ENCODE measurements at regions of chr14 and their contacts with region 1.

Region 1: DNA sequence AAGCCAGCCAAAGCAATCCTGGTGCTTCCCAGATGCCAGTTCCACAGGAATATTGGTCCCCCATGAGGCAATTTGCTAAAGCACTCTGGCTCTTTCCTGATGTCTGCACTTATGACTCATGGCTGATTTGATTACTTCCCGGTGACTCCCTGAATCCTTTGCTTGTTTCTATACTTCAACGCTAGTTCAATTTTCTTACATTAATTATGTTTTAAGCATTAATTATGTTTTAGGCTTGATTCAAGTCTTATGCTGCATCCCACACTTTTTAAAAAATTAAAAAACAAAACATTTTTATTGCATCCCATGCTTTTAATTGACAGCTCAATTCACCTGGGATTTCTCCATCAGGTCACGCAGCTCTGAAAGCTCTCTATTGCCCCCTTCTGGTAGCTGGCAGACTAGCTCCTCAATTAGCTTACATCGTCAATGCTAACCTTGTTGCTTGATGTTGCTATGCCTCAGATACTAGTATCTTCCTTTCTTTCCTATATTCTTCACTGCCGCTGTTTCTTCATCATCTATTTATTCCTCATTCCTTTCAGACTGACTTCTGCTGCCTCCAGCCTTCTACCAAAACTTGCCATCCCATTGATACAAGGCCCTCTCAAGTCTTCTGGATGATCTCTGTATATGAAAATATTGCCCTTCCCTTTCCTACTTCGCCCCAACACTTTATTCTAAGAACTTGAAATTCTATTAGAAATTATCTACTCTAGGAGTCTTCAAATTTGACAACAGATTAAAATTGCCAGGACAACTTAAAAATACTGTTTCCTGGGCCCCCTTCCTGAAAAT is 32.0 kb downstream of the TSHR start:
- DNase-seq: peak; percentile 74
- ATAC-seq: peak; percentile 34
- H3K4me3 Mint-ChIP-seq: no peak overlapping the region
- H3K27ac Mint-ChIP-seq: no peak overlapping the region
- H3K4me1 Mint-ChIP-seq: no peaks in the 10 kb centered on the region
- H3K27me3 Mint-ChIP-seq: peaks cover 9% of the 10 kb centered on the region

Region 2: DNA sequence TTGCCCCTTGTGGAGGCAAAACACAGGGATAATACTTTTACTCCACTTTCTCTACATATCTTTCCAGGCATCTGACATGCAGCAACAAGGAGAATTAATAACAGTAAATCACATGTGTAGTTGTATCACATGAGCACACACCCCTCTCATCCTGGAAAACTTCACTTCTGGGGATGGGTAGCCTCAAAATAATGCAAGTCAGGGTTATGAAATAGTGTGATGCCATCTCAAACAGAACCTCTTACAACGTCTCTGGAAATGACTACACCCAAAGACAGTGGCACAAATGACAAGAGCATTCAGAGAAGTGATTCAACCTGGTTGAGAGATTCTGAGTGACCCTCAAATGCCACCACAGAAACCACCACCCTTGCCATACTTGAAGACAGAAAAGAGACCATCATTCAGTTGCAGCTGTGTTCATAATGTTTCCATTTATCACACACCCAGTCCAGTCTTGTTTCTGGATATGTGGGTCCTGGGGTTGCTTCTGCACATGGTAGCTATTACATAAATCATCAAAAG is 778.9 kb before region 1 on chr14:
- CTCF ChIA-PET with region 1: no interaction called
- POLR2A ChIA-PET with region 1: no interaction called
- intact Hi-C with region 1: loop called in 1 of 2 experiments (anchors 5 kb)
- DNase-seq: peak; percentile 8
- ATAC-seq: no peak
- H3K4me3 Mint-ChIP-seq: no peak overlapping the region
- H3K27ac Mint-ChIP-seq: no peak overlapping the region
- H3K4me1 Mint-ChIP-seq: no peaks in the 10 kb centered on the region
- H3K27me3 Mint-ChIP-seq: peaks cover 1% of the 10 kb centered on the region

Region 3: GRCh38 chr14:80850197-80850814 is 137.1 kb before region 1 on chr14:
- CTCF ChIA-PET with region 1: no interaction called
- POLR2A ChIA-PET with region 1: no interaction called
- intact Hi-C with region 1: loop called in 1 of 2 experiments (anchors 5 kb)
- DNase-seq: no peak
- ATAC-seq: no peak
- H3K4me3 Mint-ChIP-seq: no peak overlapping the region
- H3K27ac Mint-ChIP-seq: no peak overlapping the region
- H3K4me1 Mint-ChIP-seq: no peaks in the 10 kb centered on the region
- H3K27me3 Mint-ChIP-seq: no peaks in the 10 kb centered on the region

Region 4: DNA sequence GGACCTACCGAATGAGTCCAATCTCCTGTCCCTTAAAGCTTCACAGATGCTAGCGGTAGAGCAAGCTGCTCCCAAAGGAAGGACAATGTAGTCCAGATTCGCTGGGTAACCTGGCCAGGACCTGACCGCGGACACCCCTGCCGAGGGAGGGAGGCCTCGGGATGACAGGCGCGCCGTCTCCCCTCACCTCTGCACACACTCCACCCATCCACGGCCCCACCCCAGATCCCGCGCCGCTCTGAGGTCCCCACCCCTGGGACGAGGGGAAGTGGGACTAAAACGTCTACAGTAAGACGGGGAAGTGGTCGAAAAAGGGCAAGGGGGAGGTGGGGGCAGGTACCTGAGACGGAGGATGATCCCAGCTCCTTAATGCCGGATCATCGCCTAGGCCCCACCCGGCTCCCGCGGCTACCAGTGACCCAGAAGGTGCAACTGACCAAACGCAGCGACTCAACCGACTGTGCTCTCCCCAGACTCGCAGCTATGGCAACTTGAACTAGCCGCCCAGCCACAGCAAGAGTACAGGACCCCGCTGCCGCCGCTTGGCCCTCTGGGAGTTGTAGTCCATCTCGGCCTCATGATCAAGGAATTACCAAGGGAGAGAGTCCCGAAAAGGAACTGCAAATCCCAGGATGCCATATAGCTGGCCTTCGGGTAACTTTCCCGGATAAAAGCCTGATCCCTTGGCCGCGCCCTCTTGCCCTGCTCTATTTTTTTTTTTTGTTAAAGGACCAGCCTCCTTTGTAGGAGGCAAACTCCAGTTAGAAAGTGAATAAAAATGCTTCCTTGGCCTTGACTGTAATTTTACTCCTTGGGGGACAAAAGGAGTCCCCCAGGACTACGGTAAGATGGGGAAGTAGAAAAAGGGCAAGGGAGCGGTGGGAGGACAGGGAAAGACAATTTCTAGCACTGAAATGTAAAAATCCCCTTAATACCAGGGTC is 45.9 kb before region 1 on chr14 and contains the start of gene CEP128:
- CTCF ChIA-PET with region 1: interaction called, 13 read pairs
- POLR2A ChIA-PET with region 1: interaction called, 3 read pairs
- intact Hi-C with region 1: no loop called
- DNase-seq: peak; percentile 93
- ATAC-seq: peak; percentile 85
- H3K4me3 Mint-ChIP-seq: peak within 1 kb of the TSS; percentile 90
- H3K27ac Mint-ChIP-seq: peak within 1 kb of the TSS; percentile 96
- H3K4me1 Mint-ChIP-seq: peaks cover 33% of the 10 kb centered on the region
- H3K27me3 Mint-ChIP-seq: no peaks in the 10 kb centered on the region
- total RNA-seq, gene CEP128: 18.6 to 21.6 TPM

Region 5: GRCh38 chr14:80973931-80974641 is 13.3 kb before region 1 on chr14:
- CTCF ChIA-PET with region 1: interaction called, 102 read pairs
- POLR2A ChIA-PET with region 1: interaction called, 4 read pairs
- intact Hi-C with region 1: no loop called
- DNase-seq: no peak
- ATAC-seq: peak; percentile 16
- H3K4me3 Mint-ChIP-seq: no peak overlapping the region
- H3K27ac Mint-ChIP-seq: no peak overlapping the region
- H3K4me1 Mint-ChIP-seq: peaks cover 8% of the 10 kb centered on the region
- H3K27me3 Mint-ChIP-seq: peaks cover 9% of the 10 kb centered on the region